Gastrocnemius medialis (tissue), 4 donors: ENCODE measurements at regions of chr13 and their contacts with region 1.

Region 1: GRCh38 chr13:86825410-86825809 is 845.8 kb upstream of the SLITRK5 start:
- DNase-seq: no peak
- ATAC-seq: no peak
- H3K4me3 ChIP-seq: no peak overlapping the region
- H3K27ac ChIP-seq: no peak overlapping the region
- H3K4me1 ChIP-seq: no peaks in the 10 kb centered on the region
- H3K27me3 ChIP-seq: no peaks in the 10 kb centered on the region
- CTCF ChIP-seq: no peak
- POLR2A ChIP-seq: no peak

Region 2: GRCh38 chr13:86765462-86765861 is 59.9 kb before region 1 on chr13:
- in situ Hi-C with region 1: loop called in 1 of 4 experiments (anchors 10 kb)
- intact Hi-C with region 1: no loop called
- DNase-seq: no peak
- ATAC-seq: no peak
- H3K4me3 ChIP-seq: no peak overlapping the region
- H3K27ac ChIP-seq: no peak overlapping the region
- H3K4me1 ChIP-seq: no peaks in the 10 kb centered on the region
- H3K27me3 ChIP-seq: no peaks in the 10 kb centered on the region
- CTCF ChIP-seq: no peak
- POLR2A ChIP-seq: no peak